ENCODE measurements at regions of chr17 and their contacts with region 1.

Region 1: DNA sequence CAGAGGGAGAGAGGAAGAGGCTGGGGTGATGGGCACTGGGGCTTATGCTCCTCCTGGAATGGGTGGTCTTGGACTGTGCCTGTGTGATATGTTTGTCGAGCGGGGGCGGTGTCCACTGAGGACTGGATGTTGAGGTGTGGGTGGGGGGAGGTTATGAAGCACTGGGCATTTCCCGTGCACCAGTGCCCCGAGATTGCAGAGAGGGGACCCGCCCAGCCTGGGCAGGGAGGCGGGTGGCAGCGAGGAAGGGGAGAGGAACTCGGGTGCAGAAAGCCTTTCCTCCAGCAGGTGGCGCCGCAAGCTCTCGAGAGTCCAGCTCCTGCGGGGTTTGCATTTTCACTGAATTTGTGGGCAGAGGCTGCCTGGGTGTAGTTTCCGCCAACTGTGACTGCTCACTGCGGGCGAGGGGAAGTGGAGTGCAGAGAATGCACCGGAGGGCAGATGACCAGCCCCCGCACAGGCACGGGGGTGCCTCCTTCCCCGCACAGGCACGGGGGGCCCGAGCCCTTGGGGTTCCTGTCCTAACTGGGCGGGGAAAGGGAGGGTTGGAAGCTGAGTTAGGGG is 190.6 kb downstream of the SEC14L1 start:
- DNase-seq: peak; percentile 84
- ATAC-seq: peak; percentile 85
- H3K4me3 ChIP-seq: peak overlapping the region in 1 of 3 experiments; percentile 35; a peak in 1 of 6 replicates
- H3K27ac ChIP-seq: no peak overlapping the region
- H3K4me1 ChIP-seq: peaks cover 49% of the 10 kb centered on the region
- H3K27me3 ChIP-seq: no peaks in the 10 kb centered on the region
- CTCF ChIP-seq: peak; percentile 99
- EP300 ChIP-seq: no peak
- POLR2A ChIP-seq: no peak
- RAD21 ChIP-seq: peak; percentile 99

Region 2: DNA sequence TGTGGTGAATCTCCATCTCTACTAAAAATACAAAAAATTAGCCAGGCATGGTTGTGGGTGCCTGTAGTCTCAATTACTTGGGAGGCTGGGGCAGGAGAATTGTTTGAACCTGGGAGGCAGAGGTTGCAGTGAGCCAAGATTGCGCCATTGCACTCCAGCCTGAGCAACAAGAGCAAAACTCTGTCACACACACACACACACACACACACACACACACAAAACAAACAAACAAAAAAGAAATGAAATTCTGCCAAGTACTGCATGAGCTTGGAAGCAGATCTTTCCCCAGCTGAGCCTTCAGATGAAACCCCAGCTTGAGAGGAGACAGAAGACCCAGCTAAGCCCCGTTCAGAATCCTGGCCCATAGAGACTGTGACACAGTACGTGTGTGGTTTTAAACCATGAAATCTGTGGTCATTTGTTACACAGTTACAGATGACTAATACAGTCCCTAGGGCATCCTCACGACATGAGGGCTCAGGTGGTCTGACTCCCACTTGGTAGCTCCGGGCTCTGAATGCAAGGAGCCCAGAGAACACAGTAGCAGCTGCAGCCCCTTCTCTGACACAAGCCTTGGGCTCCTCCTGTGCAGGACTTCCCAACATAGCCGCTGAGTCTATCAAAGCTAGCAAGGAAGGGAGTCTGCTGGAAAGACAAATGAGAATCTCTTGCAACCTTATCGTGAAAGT is 57.8 kb before region 1 on chr17:
- CTCF ChIA-PET with region 1: no interaction called
- POLR2A ChIA-PET with region 1: no interaction called
- in situ Hi-C with region 1: no loop called
- intact Hi-C with region 1: no loop called
- DNase-seq: no peak
- ATAC-seq: peak; percentile 28; the same call in 2 of the 3 replicates
- H3K4me3 ChIP-seq: no peak overlapping the region
- H3K27ac ChIP-seq: no peak overlapping the region
- H3K4me1 ChIP-seq: peaks cover 23% of the 10 kb centered on the region
- H3K27me3 ChIP-seq: peaks cover 0 to 2% of the 10 kb centered on the region in 2 experiments; a peak in 1 of 5 replicates
- CTCF ChIP-seq: no peak
- EP300 ChIP-seq: no peak
- POLR2A ChIP-seq: no peak
- RAD21 ChIP-seq: no peak

Region 3: DNA sequence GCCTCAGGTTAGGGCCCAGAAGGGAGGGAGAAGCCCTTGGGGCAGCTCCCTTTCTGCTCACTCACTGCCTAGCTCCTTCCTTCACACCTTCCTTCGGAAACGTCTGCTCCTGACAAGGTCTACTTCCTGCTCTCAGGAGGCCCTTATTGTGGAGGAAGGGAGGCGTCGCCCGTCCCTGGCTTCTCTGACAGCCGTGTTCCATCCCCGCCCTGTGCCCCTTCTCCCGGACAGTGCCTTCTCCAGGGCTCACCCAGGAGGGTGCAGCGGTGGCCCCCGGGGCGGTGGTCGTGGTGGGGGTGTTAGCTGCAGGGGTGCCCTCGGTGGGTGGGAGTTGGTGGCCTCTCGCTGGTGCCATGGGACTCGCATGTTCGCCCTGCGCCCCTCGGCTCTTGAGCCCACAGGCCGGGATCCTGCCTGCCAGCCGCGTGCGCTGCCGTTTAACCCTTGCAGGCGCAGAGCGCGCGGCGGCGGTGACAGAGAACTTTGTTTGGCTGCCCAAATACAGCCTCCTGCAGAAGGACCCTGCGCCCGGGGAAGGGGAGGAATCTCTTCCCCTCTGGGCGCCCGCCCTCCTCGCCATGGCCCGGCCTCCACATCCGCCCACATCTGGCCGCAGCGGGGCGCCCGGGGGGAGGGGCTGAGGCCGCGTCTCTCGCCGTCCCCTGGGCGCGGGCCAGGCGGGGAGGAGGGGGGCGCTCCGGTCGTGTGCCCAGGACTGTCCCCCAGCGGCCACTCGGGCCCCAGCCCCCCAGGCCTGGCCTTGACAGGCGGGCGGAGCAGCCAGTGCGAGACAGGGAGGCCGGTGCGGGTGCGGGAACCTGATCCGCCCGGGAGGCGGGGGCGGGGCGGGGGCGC is 41.3 kb after region 1 on chr17:
- CTCF ChIA-PET with region 1: interaction called, 6 read pairs
- POLR2A ChIA-PET with region 1: interaction called, 4 read pairs
- in situ Hi-C with region 1: no loop called
- intact Hi-C with region 1: loop called (anchors 1 kb)
- DNase-seq: peak; percentile 94
- ATAC-seq: peak; percentile 75
- H3K4me3 ChIP-seq: peak overlapping the region; percentile 76 to 91 (median 88); a peak in 5 of 6 replicates
- H3K27ac ChIP-seq: peak overlapping the region; percentile 71
- H3K4me1 ChIP-seq: peaks cover 65% of the 10 kb centered on the region
- H3K27me3 ChIP-seq: no peaks in the 10 kb centered on the region
- CTCF ChIP-seq: peak; percentile 63
- EP300 ChIP-seq: peak in 1 of 2 experiments; percentile 37; a peak in 1 of 4 replicates
- POLR2A ChIP-seq: no peak; a peak in 1 of 4 replicates
- RAD21 ChIP-seq: peak; percentile 55

Region 4: GRCh38 chr17:77429919-77430752 is 98.8 kb after region 1 on chr17:
- CTCF ChIA-PET with region 1: interaction called, 7 read pairs
- POLR2A ChIA-PET with region 1: interaction called, 6 read pairs
- in situ Hi-C with region 1: loop called (anchors 5 kb)
- intact Hi-C with region 1: no loop called
- DNase-seq: peak; percentile 97
- ATAC-seq: peak; percentile 79
- H3K4me3 ChIP-seq: peak overlapping the region in 1 of 3 experiments; percentile 0; a peak in 1 of 6 replicates
- H3K27ac ChIP-seq: peak overlapping the region; percentile 61
- H3K4me1 ChIP-seq: peaks cover 50% of the 10 kb centered on the region
- H3K27me3 ChIP-seq: no peaks in the 10 kb centered on the region
- CTCF ChIP-seq: peak; percentile 96
- EP300 ChIP-seq: peak in 1 of 2 experiments; percentile 49; a peak in 1 of 4 replicates
- POLR2A ChIP-seq: no peak
- RAD21 ChIP-seq: peak; percentile 97

Region 5: GRCh38 chr17:77494664-77495435 is 163.5 kb after region 1 on chr17:
- CTCF ChIA-PET with region 1: interaction called, 20 read pairs
- POLR2A ChIA-PET with region 1: no interaction called
- in situ Hi-C with region 1: loop called (anchors 5 kb)
- intact Hi-C with region 1: loop called (anchors 1 kb)
- DNase-seq: peak; percentile 62
- ATAC-seq: peak; percentile 58
- H3K4me3 ChIP-seq: no peak overlapping the region
- H3K27ac ChIP-seq: no peak overlapping the region
- H3K4me1 ChIP-seq: peaks cover 5% of the 10 kb centered on the region
- H3K27me3 ChIP-seq: no peaks in the 10 kb centered on the region
- CTCF ChIP-seq: peak; percentile 97
- EP300 ChIP-seq: no peak
- POLR2A ChIP-seq: 0 out of 4 replicates have a peak, but pooled peaks of 1 of the 2 experiments have one; percentile 13
- RAD21 ChIP-seq: peak; percentile 98

Measured in HepG2 (cell line).